ENCODE measurements at regions of chr3 and their contacts with region 1.

Region 1: DNA sequence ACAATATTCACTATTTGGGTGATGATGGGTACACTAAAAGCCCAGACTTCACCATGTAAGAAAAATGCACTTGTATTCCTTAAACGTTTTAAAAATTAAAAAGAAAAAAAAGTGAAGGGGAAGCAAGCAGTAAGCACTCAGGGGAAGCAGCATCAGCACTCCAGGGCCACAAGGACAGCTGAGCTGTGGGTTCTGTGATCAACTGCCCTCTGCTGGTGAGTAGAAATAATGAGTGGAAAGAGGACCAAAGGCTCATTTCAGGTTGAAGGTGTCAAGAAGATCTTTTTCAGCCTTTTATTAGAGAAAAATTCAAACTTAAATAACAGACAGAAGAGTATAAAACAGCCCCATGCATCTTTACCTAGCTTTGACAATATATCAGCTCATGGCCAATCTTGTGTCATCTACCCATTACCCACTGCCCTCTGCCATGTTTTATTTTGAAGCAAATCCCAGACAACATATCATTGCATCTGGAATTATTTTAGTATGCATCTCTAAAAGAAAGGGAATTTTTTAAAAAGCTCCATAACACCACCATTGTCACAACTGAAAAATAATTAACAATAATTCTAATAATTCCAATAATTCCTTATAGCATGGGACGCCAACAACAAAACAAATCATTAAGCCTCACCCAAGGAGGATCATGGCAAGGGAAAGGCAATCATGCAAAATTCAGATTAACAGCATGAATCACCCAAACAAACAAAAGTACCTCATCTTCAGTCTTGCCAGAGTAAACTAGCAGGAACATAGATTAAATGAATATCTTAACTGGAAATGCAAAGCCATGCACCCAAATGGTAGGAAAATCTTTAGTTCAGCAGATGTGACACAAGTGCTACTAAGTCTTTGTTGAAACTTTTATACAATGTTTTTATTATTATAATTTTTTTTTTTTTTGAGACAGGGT is 42.5 kb downstream of the TAMM41 start:
- H3K4me3 Mint-ChIP-seq: no peak overlapping the region
- H3K27ac Mint-ChIP-seq: no peak overlapping the region
- H3K4me1 Mint-ChIP-seq: no peaks in the 10 kb centered on the region
- H3K27me3 Mint-ChIP-seq: no peaks in the 10 kb centered on the region

Region 2: DNA sequence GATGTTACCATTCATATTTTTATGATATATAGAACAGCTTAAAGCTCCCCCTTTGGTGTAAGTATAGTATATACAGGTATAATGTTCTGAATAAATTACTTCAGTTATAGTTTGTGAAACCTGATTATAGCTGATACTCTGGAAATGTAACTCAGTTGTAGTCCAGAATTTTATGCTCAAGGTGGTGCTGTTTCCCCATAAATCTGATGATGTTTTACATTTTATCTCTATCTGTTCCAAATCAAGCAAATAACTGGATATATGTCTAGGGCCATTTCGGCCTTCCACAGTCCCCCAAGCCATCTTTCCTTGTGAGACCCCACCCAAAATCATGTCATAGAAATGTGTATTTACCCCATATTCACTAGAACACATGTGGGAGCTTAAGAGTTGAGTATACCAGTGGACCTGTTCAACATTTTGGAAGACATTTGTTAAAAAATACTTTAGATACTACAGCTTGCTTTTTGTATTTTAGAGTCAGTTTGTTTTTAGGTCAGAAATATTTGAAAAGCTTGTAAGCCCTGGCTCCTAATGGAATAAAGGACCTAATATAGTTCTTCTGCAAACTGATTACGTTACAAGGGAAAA is 424.9 kb before region 1 on chr3:
- intact Hi-C with region 1: loop called (anchors 2 kb)
- H3K4me3 Mint-ChIP-seq: no peak overlapping the region
- H3K27ac Mint-ChIP-seq: no peak overlapping the region
- H3K4me1 Mint-ChIP-seq: peaks cover 12% of the 10 kb centered on the region
- H3K27me3 Mint-ChIP-seq: no peaks in the 10 kb centered on the region

Region 3: GRCh38 chr3:12143949-12144504 is 339.8 kb after region 1 on chr3:
- intact Hi-C with region 1: no loop called
- H3K4me3 Mint-ChIP-seq: no peak overlapping the region
- H3K27ac Mint-ChIP-seq: no peak overlapping the region
- H3K4me1 Mint-ChIP-seq: peaks cover 34% of the 10 kb centered on the region
- H3K27me3 Mint-ChIP-seq: peaks cover 11% of the 10 kb centered on the region